ENCODE measurements at regions of chr9 and their contacts with region 1.

Region 1: DNA sequence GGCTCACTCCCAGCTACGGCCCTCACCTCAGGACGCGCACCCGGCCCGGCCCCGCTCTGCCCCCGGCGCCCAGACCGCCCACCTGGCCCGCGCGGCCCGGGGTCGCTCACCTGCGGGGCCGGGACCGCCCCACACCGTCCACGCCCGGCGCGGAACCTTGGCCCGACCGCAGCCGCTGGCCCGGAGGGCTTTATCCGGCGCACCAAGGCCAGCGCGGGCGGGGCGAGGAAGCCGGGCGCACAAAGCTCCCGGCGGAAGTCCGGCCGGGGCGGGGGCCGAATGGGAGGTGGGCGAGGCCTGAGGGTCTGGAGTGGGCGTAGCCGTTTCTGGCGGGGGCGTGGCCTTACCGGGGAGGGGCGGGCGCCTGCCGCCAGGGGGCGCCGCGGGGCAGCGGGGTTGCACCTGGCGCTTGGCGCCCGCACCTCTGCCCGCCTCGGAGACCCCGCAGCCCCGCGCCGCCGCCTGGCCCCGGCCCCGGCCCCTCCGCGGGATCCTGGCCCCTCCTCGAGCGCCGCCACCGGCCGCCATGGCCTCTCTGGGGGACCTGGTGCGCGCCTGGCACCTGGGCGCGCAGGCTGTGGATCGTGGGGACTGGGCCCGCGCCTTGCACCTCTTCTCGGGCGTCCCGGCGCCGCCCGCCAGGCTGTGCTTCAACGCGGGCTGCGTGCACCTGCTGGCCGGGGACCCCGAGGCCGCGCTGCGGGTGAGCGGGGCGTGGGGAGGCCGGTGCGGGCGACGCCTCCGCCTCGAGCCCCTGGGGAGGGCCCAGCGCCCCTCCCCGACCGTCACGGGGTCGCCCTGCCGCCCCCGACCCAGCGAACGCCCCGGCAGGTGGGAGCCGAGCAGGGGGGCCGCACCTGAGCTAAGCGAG is at the starts of genes EXD3 and NOXA1:
- DNase-seq: peak; percentile 46
- H3K4me3 ChIP-seq: peak within 1 kb of the TSS; percentile 72
- CTCF ChIP-seq: peak; percentile 62

Region 2: GRCh38 chr9:137411671-137412380 is 11.4 kb before region 1 on chr9:
- CTCF ChIA-PET with region 1: interaction called, 41 read pairs
- POLR2A ChIA-PET with region 1: interaction called, 3 read pairs
- DNase-seq: no peak
- H3K4me3 ChIP-seq: no peak overlapping the region
- CTCF ChIP-seq: no peak

Region 3: GRCh38 chr9:137435980-137436760 is 12.9 kb after region 1 on chr9:
- CTCF ChIA-PET with region 1: interaction called, 13 read pairs
- POLR2A ChIA-PET with region 1: interaction called, 6 read pairs
- DNase-seq: no peak
- H3K4me3 ChIP-seq: no peak overlapping the region
- CTCF ChIP-seq: no peak

Region 4: DNA sequence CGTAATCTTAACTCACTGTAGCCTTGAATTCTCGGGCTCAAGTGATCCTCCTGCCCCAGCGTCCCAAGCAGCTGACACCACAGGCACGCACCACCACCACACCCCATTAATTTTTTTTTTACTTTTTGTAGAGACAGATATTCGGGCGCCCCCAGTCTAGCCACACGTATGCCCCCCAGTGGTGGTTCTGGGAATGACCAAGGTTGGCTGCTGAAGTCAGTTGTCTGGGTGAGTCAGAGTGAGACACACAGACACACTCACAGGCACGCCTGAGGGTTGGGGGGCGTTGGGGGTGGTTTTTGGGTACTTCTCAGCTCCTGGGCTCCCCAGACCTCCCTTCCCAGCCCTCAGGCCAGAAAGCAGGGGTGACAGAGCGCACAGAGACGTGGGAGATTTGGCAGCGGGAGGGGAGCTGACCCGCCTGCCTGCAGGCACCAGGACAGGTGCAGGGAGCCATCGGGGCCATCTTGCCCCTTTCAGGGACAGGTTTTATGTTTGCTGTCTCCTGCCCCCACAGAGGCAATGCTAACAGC is 22.1 kb after region 1 on chr9:
- CTCF ChIA-PET with region 1: interaction called, 27 read pairs
- POLR2A ChIA-PET with region 1: interaction called, 3 read pairs
- DNase-seq: no peak
- H3K4me3 ChIP-seq: no peak overlapping the region
- CTCF ChIP-seq: peak; percentile 78

Region 5: GRCh38 chr9:137453643-137454081 is 30.4 kb after region 1 on chr9:
- CTCF ChIA-PET with region 1: interaction called, 25 read pairs
- POLR2A ChIA-PET with region 1: interaction called, 3 read pairs
- DNase-seq: no peak
- H3K4me3 ChIP-seq: peak overlapping the region; percentile 38; the same call in 1 of the 2 replicates
- CTCF ChIP-seq: no peak